A549 (cell line): ENCODE measurements at regions of chr1 and their contacts with region 1.

Region 1: GRCh38 chr1:180101411-180101810 is 53.3 kb upstream of the QSOX1 start:
- DNase-seq: no peak
- ATAC-seq: no peak; a peak in 1 of 6 replicates
- H3K4me3 ChIP-seq: no peak overlapping the region
- H3K27ac ChIP-seq: no peak overlapping the region
- H3K4me1 ChIP-seq: peaks cover 16% of the 10 kb centered on the region
- CTCF ChIP-seq: no peak
- EP300 ChIP-seq: no peak
- POLR2A ChIP-seq: no peak
- RAD21 ChIP-seq: no peak

Region 2: DNA sequence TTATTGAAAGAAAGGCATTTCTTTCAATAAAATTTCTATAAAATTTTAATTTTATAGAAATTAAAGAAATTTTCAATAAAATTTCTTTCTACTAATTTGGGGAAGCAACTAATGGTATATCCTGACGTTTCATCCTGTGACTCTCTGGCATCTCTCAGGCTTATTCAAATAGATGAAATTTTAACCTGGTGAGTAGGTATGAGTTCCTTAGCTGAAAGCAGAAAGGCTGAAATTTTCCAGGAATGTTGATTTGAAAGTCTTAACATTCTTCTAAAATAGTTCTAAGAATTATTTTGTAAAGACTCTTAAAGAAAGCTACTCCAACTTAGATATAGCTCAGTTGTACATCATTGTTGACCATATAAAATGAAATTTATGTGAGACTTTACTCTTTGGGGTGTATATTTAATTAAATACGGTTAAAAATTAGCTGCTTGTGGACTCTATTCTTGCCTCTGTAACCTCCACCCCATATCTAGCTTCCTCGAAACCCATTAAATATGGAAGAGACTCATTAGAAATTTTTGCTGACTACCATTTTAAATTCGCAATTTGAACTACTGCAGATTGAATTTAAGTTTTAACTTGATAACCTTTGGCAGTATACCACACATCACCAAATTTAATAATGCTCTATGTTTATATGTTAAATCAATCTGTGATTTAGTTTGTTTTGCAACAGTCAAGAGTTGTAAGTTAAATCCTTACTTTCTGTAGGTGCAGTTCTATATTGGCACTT is 35.4 kb before region 1 on chr1:
- CTCF ChIA-PET with region 1: no interaction called
- POLR2A ChIA-PET with region 1: no interaction called
- DNase-seq: no peak
- ATAC-seq: no peak
- H3K4me3 ChIP-seq: no peak overlapping the region
- H3K27ac ChIP-seq: no peak overlapping the region
- H3K4me1 ChIP-seq: no peaks in the 10 kb centered on the region
- CTCF ChIP-seq: no peak
- EP300 ChIP-seq: no peak
- POLR2A ChIP-seq: no peak
- RAD21 ChIP-seq: no peak

Region 3: GRCh38 chr1:180112984-180113647 is 11.7 kb after region 1 on chr1:
- CTCF ChIA-PET with region 1: interaction called, 10 read pairs
- POLR2A ChIA-PET with region 1: no interaction called
- DNase-seq: no peak
- ATAC-seq: no peak
- H3K4me3 ChIP-seq: no peak overlapping the region
- H3K27ac ChIP-seq: no peak overlapping the region
- H3K4me1 ChIP-seq: peaks cover 12% of the 10 kb centered on the region
- CTCF ChIP-seq: no peak
- EP300 ChIP-seq: no peak
- POLR2A ChIP-seq: no peak
- RAD21 ChIP-seq: no peak

Region 4: GRCh38 chr1:180198196-180198595 is 96.8 kb after region 1 on chr1:
- CTCF ChIA-PET with region 1: no interaction called
- POLR2A ChIA-PET with region 1: no interaction called
- DNase-seq: no peak
- ATAC-seq: no peak
- H3K4me3 ChIP-seq: no peak overlapping the region
- H3K27ac ChIP-seq: no peak overlapping the region
- H3K4me1 ChIP-seq: no peaks in the 10 kb centered on the region
- CTCF ChIP-seq: no peak
- EP300 ChIP-seq: no peak
- POLR2A ChIP-seq: no peak
- RAD21 ChIP-seq: no peak